Activated B cell treated with CpG ODN at 0.5 μM for 24 hours (primary cell): ENCODE measurements at regions of chr2 and their contacts with region 1.

Region 1: GRCh38 chr2:196268538-196269338 is 97.4 kb upstream of the STK17B start:
- DNase-seq: no peak
- ATAC-seq: peak; percentile 73
- H3K4me3 Mint-ChIP-seq: peak overlapping the region; percentile 67
- H3K27ac Mint-ChIP-seq: peak overlapping the region; percentile 88
- H3K4me1 Mint-ChIP-seq: peaks cover 64% of the 10 kb centered on the region
- H3K27me3 Mint-ChIP-seq: no peaks in the 10 kb centered on the region
- CTCF ChIP-seq: no peak

Region 2: GRCh38 chr2:196249860-196250259 is 18.9 kb before region 1 on chr2:
- CTCF ChIA-PET with region 1: interaction called, 4 read pairs
- POLR2A ChIA-PET with region 1: interaction called, 18 read pairs
- intact Hi-C with region 1: loop called (anchors 1 kb)
- DNase-seq: peak; percentile 29
- ATAC-seq: peak; percentile 90
- H3K4me3 Mint-ChIP-seq: peak overlapping the region; percentile 47
- H3K27ac Mint-ChIP-seq: peak overlapping the region; percentile 91
- H3K4me1 Mint-ChIP-seq: peaks cover 75% of the 10 kb centered on the region
- H3K27me3 Mint-ChIP-seq: no peaks in the 10 kb centered on the region
- CTCF ChIP-seq: no peak

Region 3: DNA sequence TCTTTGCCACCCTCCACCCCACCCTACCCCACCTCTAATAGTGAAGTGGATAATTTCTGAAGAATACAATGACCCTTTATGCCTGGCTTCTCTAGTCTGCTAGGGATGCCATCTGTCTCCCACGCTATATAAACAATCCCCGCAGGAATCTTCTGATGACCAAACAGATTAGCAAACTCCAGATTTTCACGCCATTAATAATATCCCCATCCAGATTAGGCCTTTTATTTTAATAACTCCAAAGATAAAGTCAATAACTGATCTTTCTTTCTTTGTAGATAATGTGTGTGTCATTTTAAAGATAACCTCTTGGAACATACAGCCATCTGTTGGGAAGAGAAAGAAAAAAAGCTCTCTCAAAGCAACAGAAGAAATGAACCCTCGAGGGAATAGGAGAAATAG is 322.9 kb after region 1 on chr2:
- CTCF ChIA-PET with region 1: no interaction called
- POLR2A ChIA-PET with region 1: interaction called, 12 read pairs
- intact Hi-C with region 1: no loop called
- DNase-seq: no peak
- ATAC-seq: no peak
- H3K4me3 Mint-ChIP-seq: peak overlapping the region; percentile 76
- H3K27ac Mint-ChIP-seq: no peak overlapping the region
- H3K4me1 Mint-ChIP-seq: peaks cover 10% of the 10 kb centered on the region
- H3K27me3 Mint-ChIP-seq: peaks cover 56% of the 10 kb centered on the region
- CTCF ChIP-seq: no peak

Region 4: GRCh38 chr2:196954001-196954400 is 685.3 kb after region 1 on chr2:
- CTCF ChIA-PET with region 1: no interaction called
- POLR2A ChIA-PET with region 1: no interaction called
- intact Hi-C with region 1: no loop called
- DNase-seq: no peak
- ATAC-seq: no peak
- H3K4me3 Mint-ChIP-seq: no peak overlapping the region
- H3K27ac Mint-ChIP-seq: no peak overlapping the region
- H3K4me1 Mint-ChIP-seq: no peaks in the 10 kb centered on the region
- H3K27me3 Mint-ChIP-seq: peaks cover 10% of the 10 kb centered on the region
- CTCF ChIP-seq: no peak